ENCODE measurements at regions of chr20 and their contacts with region 1.

Region 1: DNA sequence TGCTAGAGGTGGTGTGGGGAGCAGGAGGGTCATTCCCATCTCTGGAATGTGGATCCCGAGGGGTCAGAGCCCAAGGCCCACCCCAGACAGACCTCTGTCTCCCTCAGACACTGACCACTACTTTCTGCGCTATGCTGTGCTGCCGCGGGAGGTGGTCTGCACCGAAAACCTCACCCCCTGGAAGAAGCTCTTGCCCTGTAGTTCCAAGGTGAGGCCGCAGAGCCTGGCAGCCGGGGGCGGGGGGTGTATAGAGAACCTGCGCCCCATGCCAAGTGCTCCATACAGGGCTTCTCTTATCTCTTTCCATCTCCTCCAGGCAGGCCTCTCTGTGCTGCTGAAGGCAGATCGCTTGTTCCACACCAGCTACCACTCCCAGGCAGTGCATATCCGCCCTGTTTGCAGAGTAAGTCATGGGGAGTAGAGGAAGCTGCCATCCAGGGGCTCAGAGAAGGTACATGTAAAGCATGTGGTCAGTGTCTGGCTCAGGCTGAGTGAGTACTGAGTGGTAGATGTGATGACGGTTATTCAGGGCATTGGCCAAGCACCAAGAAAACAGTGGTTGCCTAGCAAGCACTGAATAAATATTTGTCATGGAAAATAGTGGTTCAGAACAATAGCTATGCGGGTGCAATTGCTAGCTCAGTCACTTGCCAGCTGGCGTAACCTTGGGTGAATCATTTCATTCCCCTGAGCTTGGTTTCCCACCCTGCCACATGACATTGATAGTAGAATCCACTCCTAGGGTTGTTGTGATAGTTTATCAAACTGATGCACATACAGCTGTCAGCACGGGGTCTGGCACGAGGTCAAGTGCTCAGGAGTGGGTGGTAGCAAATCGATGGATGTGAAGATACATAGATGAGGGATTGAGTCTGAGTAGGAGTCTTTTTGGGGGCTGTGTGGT is 3.5 kb downstream of the PIGT start:
- DNase-seq: peak; percentile 83 to 90
- H3K4me3 ChIP-seq: no peak overlapping the region
- H3K27ac ChIP-seq: peak overlapping the region; percentile 74 to 85 (median 80)
- H3K4me1 ChIP-seq: peaks cover 36 to 48% (median 43%) of the 10 kb centered on the region in 4 donors
- H3K27me3 ChIP-seq: no peaks in the 10 kb centered on the region
- CTCF ChIP-seq: no peak
- EP300 ChIP-seq: no peak
- POLR2A ChIP-seq: no peak

Region 2: GRCh38 chr20:45368221-45368980 is 51.0 kb before region 1 on chr20:
- intact Hi-C with region 1: loop called (anchors 5 kb)
- DNase-seq: no peak
- H3K4me3 ChIP-seq: no peak overlapping the region
- H3K27ac ChIP-seq: peak overlapping the region in 2 of 5 donors; percentile 21 to 45
- H3K4me1 ChIP-seq: peaks cover 18 to 57% (median 31%) of the 10 kb centered on the region in 4 donors
- H3K27me3 ChIP-seq: no peaks in the 10 kb centered on the region
- CTCF ChIP-seq: no peak
- EP300 ChIP-seq: no peak
- POLR2A ChIP-seq: no peak

Region 3: DNA sequence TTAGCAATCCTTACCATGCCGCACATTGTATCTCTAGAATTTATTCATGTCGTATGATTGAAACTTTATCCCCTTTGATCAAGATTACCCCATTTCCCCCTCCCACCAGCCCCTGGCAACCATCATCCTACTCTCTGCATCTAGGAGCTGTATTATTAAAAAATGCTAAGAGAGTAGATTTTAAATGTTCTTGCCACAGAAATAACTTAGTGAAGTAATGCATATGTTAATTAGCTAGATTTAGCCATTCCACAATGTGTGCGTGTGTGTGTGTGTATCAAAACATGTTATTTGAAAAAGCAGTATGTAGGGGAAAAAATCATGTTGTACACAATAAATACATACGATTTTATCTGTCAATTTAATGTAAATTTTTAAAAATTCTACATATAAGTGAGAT is 107.9 kb after region 1 on chr20:
- intact Hi-C with region 1: no loop called
- DNase-seq: no peak
- H3K4me3 ChIP-seq: no peak overlapping the region
- H3K27ac ChIP-seq: no peak overlapping the region
- H3K4me1 ChIP-seq: no peaks in the 10 kb centered on the region
- H3K27me3 ChIP-seq: peaks cover 0 to 47% (median 7%) of the 10 kb centered on the region in 3 donors
- CTCF ChIP-seq: no peak
- EP300 ChIP-seq: no peak
- POLR2A ChIP-seq: no peak

Measured in stomach (tissue), 19 donors.